Calu3 (cell line): ENCODE measurements at regions of chr2 and their contacts with region 1.

Region 1: GRCh38 chr2:58046585-58047372 is at the start of gene VRK2:
- DNase-seq: peak; percentile 93
- H3K4me3 Mint-ChIP-seq: peak within 1 kb of the TSS; percentile 94
- H3K27ac Mint-ChIP-seq: peak within 1 kb of the TSS; percentile 38
- H3K4me1 Mint-ChIP-seq: peaks cover 33% of the 10 kb centered on the region
- H3K27me3 Mint-ChIP-seq: no peaks in the 10 kb centered on the region
- CTCF ChIP-seq: no peak
- total RNA-seq, gene VRK2: 23.4 and 25.4 TPM in 2 replicates

Region 2: DNA sequence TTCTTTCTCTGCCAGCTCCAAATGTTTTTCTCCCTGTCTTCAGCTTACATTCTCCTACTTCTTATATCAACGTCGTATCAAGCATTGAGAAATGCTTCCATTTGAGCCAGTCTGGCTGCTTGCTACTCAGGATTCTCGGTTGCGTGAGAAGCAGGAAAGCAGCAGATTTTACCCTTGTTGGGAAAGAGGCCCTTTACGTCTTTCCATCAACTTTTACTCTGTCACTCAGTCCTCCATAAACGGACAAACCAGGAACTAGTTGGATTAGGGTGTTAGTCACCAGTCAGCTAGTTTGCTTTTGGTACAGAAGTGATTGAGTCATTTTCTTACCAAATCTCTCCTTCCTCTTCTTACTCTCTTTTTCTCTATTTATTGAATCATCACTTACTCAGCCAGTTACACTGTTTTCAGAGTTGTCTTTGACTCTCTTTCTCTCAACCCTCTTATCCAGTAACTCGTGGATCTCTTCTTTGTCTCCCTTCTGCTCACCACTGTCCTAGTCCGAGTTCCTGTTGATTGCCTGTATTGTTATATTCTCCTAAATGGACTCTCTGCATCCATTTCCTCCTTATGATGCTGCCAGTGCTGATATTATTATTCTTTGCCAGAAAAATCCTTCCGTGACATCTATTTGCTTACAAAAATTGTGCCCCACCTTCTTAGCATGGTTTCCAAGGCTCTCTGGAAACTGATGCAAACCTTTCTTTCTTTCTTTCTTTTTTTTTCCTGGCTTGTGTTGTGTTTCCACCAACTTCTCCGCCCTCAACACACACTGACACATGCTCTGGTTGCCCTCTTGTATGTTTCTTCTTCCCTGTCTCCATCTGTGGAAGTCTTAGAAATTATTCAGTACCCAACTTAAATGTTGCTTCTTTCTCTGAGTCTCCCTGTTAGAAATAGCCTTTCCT is 61.3 kb after region 1 on chr2:
- CTCF ChIA-PET with region 1: no interaction called
- intact Hi-C with region 1: loop called (anchors 2 kb)
- DNase-seq: peak; percentile 52
- H3K4me3 Mint-ChIP-seq: peak overlapping the region; percentile 31
- H3K27ac Mint-ChIP-seq: peak overlapping the region; percentile 81
- H3K4me1 Mint-ChIP-seq: peaks cover 42% of the 10 kb centered on the region
- H3K27me3 Mint-ChIP-seq: no peaks in the 10 kb centered on the region
- CTCF ChIP-seq: no peak

Region 3: GRCh38 chr2:58237741-58238140 is 191.0 kb after region 1 on chr2:
- CTCF ChIA-PET with region 1: no interaction called
- intact Hi-C with region 1: loop called (anchors 10 kb)
- DNase-seq: no peak
- H3K4me3 Mint-ChIP-seq: peak overlapping the region; percentile 9
- H3K27ac Mint-ChIP-seq: no peak overlapping the region
- H3K4me1 Mint-ChIP-seq: peaks cover 48% of the 10 kb centered on the region
- H3K27me3 Mint-ChIP-seq: no peaks in the 10 kb centered on the region
- CTCF ChIP-seq: no peak